Spleen (tissue), 13 donors: ENCODE measurements at regions of chr6 and their contacts with region 1.

Region 1: GRCh38 chr6:134152767-134153485 is 100.5 kb upstream of the SLC2A12 start:
- DNase-seq: no peak
- H3K4me3 ChIP-seq: no peak overlapping the region
- H3K27ac ChIP-seq: no peak overlapping the region
- H3K4me1 ChIP-seq: peaks cover 0 to 5% (median 0%) of the 10 kb centered on the region in 6 donors
- H3K27me3 ChIP-seq: no peaks in the 10 kb centered on the region
- CTCF ChIP-seq: no peak
- POLR2A ChIP-seq: no peak

Region 2: GRCh38 chr6:134882426-134883038 is 729.6 kb after region 1 on chr6:
- intact Hi-C with region 1: loop called (anchors 10 kb)
- DNase-seq: no peak
- H3K4me3 ChIP-seq: no peak overlapping the region
- H3K27ac ChIP-seq: no peak overlapping the region
- H3K4me1 ChIP-seq: peaks cover 0 to 5% (median 0%) of the 10 kb centered on the region in 6 donors
- H3K27me3 ChIP-seq: peaks cover 0 to 15% (median 0%) of the 10 kb centered on the region in 7 donors
- CTCF ChIP-seq: peak; percentile 39 to 91 (median 69)
- POLR2A ChIP-seq: no peak